Testis (tissue), 5 donors: ENCODE measurements at regions of chr9 and their contacts with region 1.

Region 1: GRCh38 chr9:38088006-38088925 is 19.2 kb upstream of the SHB start:
- DNase-seq: peak; percentile 79
- H3K4me3 ChIP-seq: no peak overlapping the region
- H3K27ac ChIP-seq: no peak overlapping the region
- H3K4me1 ChIP-seq: no peaks in the 10 kb centered on the region
- H3K27me3 ChIP-seq: no peaks in the 10 kb centered on the region
- CTCF ChIP-seq: peak; percentile 80 to 98 (median 85)
- POLR2A ChIP-seq: no peak

Region 2: DNA sequence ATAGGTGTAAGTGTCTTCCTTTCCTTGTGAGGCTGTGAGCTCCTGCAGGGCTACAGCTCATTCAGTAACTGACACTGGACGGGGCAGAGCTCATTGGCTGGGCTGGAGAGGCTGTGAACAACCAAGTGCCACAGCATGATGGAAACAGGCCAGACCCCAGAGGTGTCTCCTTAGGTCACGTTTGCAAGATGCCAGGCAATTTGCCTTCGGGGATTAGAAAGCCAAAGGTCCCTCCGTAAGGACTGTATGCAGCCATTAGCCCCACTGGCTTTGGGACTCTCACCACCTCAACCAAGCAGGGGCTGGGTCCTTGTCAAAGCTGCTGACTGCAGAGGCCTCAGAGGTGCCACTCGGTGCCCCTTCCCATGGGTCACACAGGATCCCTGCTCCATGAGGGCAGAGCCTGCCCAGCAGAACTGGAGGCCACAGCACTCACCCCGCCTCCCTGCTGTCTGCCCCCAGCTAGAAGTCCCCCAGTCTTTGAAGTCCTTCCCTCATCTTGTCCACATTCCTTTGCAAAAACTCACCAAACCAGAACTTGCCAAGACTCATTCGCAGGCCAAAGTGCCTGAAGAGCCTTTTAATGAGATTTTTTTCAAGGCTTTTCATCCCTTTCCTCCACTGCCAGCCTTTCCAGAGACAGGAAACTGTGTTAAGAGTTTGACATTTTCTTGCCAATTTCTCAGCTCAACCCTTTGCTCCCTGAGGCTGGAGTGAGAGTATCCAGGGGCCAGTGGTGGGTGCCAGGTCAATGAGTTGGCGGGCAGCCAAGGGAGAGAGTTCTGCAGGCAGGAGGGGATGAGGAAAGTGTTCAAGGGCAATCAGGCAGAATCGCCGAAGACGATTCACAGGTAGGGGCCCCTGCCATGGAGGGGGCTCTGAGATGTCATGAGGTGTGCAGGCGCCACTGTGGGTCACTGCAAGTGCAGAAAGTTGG is 144.7 kb before region 1 on chr9:
- intact Hi-C with region 1: no loop called
- DNase-seq: no peak
- H3K4me3 ChIP-seq: no peak overlapping the region
- H3K27ac ChIP-seq: no peak overlapping the region
- H3K4me1 ChIP-seq: no peaks in the 10 kb centered on the region
- H3K27me3 ChIP-seq: no peaks in the 10 kb centered on the region
- CTCF ChIP-seq: no peak
- POLR2A ChIP-seq: no peak

Region 3: GRCh38 chr9:37976714-37977477 is 111.4 kb before region 1 on chr9:
- intact Hi-C with region 1: loop called (anchors 10 kb)
- DNase-seq: no peak
- H3K4me3 ChIP-seq: no peak overlapping the region
- H3K27ac ChIP-seq: no peak overlapping the region
- H3K4me1 ChIP-seq: no peaks in the 10 kb centered on the region
- H3K27me3 ChIP-seq: no peaks in the 10 kb centered on the region
- CTCF ChIP-seq: no peak
- POLR2A ChIP-seq: no peak

Region 4: DNA sequence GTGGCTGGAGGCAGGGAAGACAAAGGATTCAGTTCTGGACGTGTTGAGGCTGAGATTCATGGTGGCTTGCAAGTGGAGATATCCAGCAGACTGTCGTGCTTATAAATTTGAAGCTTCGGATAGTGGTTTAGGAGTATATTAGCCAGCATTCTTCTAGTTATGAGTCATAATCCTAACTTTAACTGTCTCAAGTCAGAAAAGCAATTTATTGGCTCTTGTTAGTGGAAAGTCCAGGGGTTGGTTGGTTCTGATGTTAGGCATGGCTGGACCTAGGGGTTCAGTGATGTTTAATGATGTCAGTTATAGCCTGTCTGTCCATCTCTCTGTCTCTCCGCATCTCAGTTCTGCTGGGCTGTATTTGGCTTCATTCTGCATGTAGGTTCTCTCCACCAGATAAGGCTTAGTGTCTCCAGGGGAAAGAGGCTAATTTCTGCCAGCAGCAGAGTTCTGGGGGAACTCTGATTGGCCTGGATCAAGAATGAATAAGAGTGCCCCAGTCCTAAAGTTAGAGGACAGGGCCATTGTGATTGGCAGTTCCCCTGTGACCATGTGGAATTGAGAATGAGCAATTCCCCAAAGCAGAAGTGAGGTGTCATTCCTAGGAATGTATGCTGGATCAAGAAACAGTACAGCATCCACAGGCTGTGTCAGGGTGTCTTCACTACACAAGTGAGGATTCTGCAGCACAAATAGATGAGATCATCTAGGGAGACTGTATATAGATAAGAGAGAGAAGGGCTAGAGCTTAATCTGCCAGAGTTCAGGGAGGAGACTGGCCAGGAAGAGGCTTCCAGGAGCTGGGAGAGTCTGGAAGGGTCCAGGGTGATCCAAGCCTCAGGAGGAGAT is 53.7 kb after region 1 on chr9:
- intact Hi-C with region 1: loop called (anchors 10 kb)
- DNase-seq: no peak
- H3K4me3 ChIP-seq: no peak overlapping the region
- H3K27ac ChIP-seq: no peak overlapping the region
- H3K4me1 ChIP-seq: no peaks in the 10 kb centered on the region
- H3K27me3 ChIP-seq: no peaks in the 10 kb centered on the region
- CTCF ChIP-seq: no peak
- POLR2A ChIP-seq: no peak

Region 5: GRCh38 chr9:38227061-38227540 is 138.8 kb after region 1 on chr9:
- intact Hi-C with region 1: no loop called
- DNase-seq: peak; percentile 15
- H3K4me3 ChIP-seq: no peak overlapping the region
- H3K27ac ChIP-seq: no peak overlapping the region
- H3K4me1 ChIP-seq: no peaks in the 10 kb centered on the region
- H3K27me3 ChIP-seq: no peaks in the 10 kb centered on the region
- CTCF ChIP-seq: no peak
- POLR2A ChIP-seq: no peak

Region 6: GRCh38 chr9:38408719-38409118 is 320.5 kb after region 1 on chr9:
- intact Hi-C with region 1: loop called (anchors 10 kb)
- DNase-seq: no peak
- H3K4me3 ChIP-seq: no peak overlapping the region
- H3K27ac ChIP-seq: no peak overlapping the region
- H3K4me1 ChIP-seq: no peaks in the 10 kb centered on the region
- H3K27me3 ChIP-seq: no peaks in the 10 kb centered on the region
- CTCF ChIP-seq: no peak
- POLR2A ChIP-seq: no peak